ENCODE measurements at regions of chr2 and their contacts with region 1.

Region 1: DNA sequence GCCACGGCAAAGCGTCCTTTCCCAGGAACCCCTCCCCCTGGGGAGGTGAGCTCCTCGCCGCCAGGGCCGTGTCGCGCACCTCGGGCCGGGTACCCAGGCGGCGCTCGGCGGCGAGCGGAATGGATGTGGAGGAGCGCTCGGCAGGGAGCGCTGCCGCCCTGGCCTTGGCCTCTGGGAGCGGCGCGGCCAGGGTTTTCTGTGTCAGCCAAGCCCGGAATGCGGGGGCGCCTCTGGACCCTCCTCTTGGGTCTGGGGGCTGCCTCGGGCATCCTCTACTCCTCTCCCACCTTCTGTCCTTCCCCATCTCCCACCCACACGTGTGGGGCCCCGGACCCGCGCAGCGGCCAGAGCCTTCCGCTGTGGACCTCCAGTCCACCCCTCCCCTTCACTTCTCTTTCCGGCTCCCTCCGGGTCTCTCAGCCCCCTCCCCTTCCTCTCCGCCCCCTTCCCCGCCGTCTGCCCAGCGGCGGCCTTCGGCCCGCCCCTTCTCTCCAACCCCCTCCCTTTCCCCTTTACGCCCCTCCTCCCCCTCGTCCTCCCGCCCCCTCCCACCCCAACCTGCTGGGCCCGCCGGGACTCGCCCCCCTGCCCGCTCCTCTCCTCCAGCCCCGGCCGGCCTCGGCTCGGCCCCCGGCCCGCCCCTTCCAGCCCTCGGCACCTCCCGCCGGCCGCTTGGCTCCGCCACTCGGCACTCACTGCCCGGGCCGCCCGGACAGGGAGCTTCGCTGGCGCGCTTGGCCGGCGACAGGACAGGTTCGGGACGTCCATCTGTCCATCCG is at the start of gene MERTK:
- DNase-seq: peak; percentile 86
- H3K4me3 ChIP-seq: peak within 1 kb of the TSS; percentile 57 to 82 (median 64)
- H3K27ac ChIP-seq: peak within 1 kb of the TSS; percentile 72 to 92 (median 84)
- H3K4me1 ChIP-seq: peaks cover 0 to 30% (median 16%) of the 10 kb centered on the region in 4 donors
- H3K27me3 ChIP-seq: peaks cover 12% of the 10 kb centered on the region
- CTCF ChIP-seq: peak; percentile 50 to 70 (median 63)
- EP300 ChIP-seq: no peak
- POLR2A ChIP-seq: peak; percentile 68
- total RNA-seq, gene MERTK: 10.8 to 28.6 (median 11.6) TPM

Region 2: DNA sequence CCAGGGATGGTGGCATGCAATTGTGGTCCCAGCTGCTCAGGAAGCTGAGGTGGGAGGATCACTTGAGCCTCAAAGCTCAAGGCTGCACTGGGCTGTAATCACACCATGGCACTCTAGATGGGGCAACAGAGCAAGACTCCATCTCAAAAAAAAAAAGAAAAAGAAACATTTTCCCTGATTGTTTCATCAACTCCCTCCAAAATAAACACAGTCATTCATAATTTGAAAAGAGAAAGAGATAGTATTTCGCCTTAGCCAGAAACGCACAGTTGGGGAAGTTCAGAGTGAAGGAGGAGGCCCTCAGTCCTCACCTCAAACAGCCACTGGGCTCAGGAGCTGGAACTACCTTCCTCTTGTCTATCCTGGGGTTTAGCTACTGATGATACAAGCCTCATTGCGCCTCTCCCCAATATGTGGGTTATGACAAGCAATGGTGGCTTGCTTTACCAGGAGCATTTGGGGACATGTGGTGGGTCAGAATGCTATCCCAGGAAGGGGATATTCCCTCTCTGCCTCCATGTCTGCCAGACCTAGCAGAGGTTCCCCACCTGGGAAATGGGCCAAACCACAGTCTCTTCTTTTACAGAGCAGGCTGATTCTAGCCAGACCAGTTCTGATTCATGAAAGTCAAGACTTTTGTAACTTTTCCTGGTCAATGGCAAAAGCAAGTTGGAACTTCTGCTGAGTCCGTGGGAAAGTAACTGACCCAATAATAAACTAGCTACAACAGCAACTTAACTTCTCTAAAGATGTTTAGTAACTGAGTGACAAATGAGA is 134.8 kb after region 1 on chr2:
- in situ Hi-C with region 1: loop called in 2 of 4 experiments (anchors 10 kb)
- intact Hi-C with region 1: no loop called
- DNase-seq: peak; percentile 35
- H3K4me3 ChIP-seq: no peak overlapping the region
- H3K27ac ChIP-seq: peak overlapping the region; percentile 20 to 56 (median 36)
- H3K4me1 ChIP-seq: peaks cover 3 to 27% (median 11%) of the 10 kb centered on the region in 4 donors
- H3K27me3 ChIP-seq: no peaks in the 10 kb centered on the region
- CTCF ChIP-seq: peak in 2 of 5 experiments; percentile 1 to 16
- EP300 ChIP-seq: no peak
- POLR2A ChIP-seq: no peak

Region 3: DNA sequence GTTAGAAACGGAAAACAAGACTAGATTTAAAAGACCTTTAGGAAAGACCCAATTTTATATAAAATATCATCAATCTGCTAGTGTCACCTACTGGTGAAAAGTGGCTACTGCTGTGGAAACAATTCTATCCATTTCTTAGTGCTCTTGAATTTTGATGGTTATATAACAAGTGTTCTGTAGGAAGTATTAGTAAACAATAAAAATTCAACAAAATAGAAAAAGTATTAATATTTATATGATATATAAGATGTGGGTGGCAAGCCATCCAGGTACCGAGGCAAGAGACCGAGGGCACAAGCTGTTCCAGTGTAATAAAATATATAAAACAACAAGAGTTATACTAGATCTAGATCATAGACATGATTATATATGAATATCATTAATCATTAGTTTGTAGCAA is 150.8 kb after region 1 on chr2:
- in situ Hi-C with region 1: loop called in 3 of 4 experiments (anchors 5 to 10 kb)
- intact Hi-C with region 1: loop called (anchors 5 kb)
- DNase-seq: peak; percentile 20
- H3K4me3 ChIP-seq: no peak overlapping the region
- H3K27ac ChIP-seq: no peak overlapping the region
- H3K4me1 ChIP-seq: peaks cover 11 to 50% (median 21%) of the 10 kb centered on the region in 4 donors
- H3K27me3 ChIP-seq: no peaks in the 10 kb centered on the region
- CTCF ChIP-seq: peak; percentile 77 to 91 (median 84)
- EP300 ChIP-seq: no peak
- POLR2A ChIP-seq: no peak

Region 4: GRCh38 chr2:112054847-112055729 is 157.0 kb after region 1 on chr2 and contains the start of gene TMEM87B:
- in situ Hi-C with region 1: loop called in 2 of 4 experiments (anchors 5 to 10 kb)
- intact Hi-C with region 1: no loop called
- DNase-seq: peak; percentile 99
- H3K4me3 ChIP-seq: peak within 1 kb of the TSS; percentile 46 to 89 (median 72)
- H3K27ac ChIP-seq: peak within 1 kb of the TSS; percentile 97 to 98 (median 98)
- H3K4me1 ChIP-seq: peaks cover 13 to 66% (median 36%) of the 10 kb centered on the region in 4 donors
- H3K27me3 ChIP-seq: no peaks in the 10 kb centered on the region
- CTCF ChIP-seq: peak in 1 of 5 experiments; percentile 13
- EP300 ChIP-seq: no peak
- POLR2A ChIP-seq: peak; percentile 91
- total RNA-seq, gene TMEM87B: 21.9 to 74.5 (median 60.7) TPM